Calu3 (cell line): ENCODE measurements at regions of chr5 and their contacts with region 1.

Region 1: GRCh38 chr5:116527582-116527981 is 47.0 kb downstream of the SEMA6A start:
- DNase-seq: no peak
- H3K4me3 Mint-ChIP-seq: peak overlapping the region; percentile 61
- H3K27ac Mint-ChIP-seq: peak overlapping the region; percentile 60
- H3K4me1 Mint-ChIP-seq: peaks cover 45% of the 10 kb centered on the region
- H3K27me3 Mint-ChIP-seq: no peaks in the 10 kb centered on the region
- CTCF ChIP-seq: no peak

Region 2: GRCh38 chr5:116516021-116516420 is 11.6 kb before region 1 on chr5:
- CTCF ChIA-PET with region 1: interaction called, 3 read pairs
- intact Hi-C with region 1: loop called (anchors 1 kb)
- DNase-seq: no peak
- H3K4me3 Mint-ChIP-seq: no peak overlapping the region
- H3K27ac Mint-ChIP-seq: peak overlapping the region; percentile 5
- H3K4me1 Mint-ChIP-seq: peaks cover 40% of the 10 kb centered on the region
- H3K27me3 Mint-ChIP-seq: no peaks in the 10 kb centered on the region
- CTCF ChIP-seq: no peak

Region 3: DNA sequence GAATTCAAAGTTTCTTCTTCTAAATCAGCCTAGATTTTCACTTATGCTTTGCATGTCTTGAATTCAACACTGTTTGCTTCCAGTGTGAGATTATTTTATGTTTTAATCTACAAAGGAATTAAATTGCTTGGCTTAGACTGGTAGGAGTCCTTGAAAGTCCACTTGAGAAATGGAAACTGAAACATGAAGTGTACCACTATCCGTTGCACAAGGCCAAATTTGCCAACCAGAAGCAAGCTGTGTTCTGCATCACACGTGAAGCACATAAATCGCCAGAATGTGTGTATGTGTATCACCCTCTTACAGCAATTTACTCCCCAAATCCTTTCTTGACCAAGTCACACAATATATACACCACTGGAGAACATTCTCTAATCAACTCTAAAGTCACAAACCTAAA is 36.7 kb after region 1 on chr5:
- CTCF ChIA-PET with region 1: no interaction called
- intact Hi-C with region 1: no loop called
- DNase-seq: no peak
- H3K4me3 Mint-ChIP-seq: no peak overlapping the region
- H3K27ac Mint-ChIP-seq: no peak overlapping the region
- H3K4me1 Mint-ChIP-seq: peaks cover 30% of the 10 kb centered on the region
- H3K27me3 Mint-ChIP-seq: no peaks in the 10 kb centered on the region
- CTCF ChIP-seq: no peak

Region 4: GRCh38 chr5:116885825-116886224 is 358.2 kb after region 1 on chr5:
- CTCF ChIA-PET with region 1: no interaction called
- intact Hi-C with region 1: no loop called
- DNase-seq: no peak
- H3K4me3 Mint-ChIP-seq: no peak overlapping the region
- H3K27ac Mint-ChIP-seq: no peak overlapping the region
- H3K4me1 Mint-ChIP-seq: no peaks in the 10 kb centered on the region
- H3K27me3 Mint-ChIP-seq: no peaks in the 10 kb centered on the region
- CTCF ChIP-seq: no peak